CD8-positive, alpha-beta T cell (primary cell): ENCODE measurements at regions of chr12 and their contacts with region 1.

Region 1: GRCh38 chr12:21657326-21658077 is at the start of gene LDHB:
- DNase-seq: peak; percentile 80 to 96 (median 93)
- ATAC-seq: peak; percentile 96
- H3K4me3 ChIP-seq: peak within 1 kb of the TSS; percentile 72 to 95
- H3K4me3 Mint-ChIP-seq: peak within 1 kb of the TSS; percentile 99
- H3K27ac ChIP-seq: peak within 1 kb of the TSS; percentile 70 to 77
- H3K27ac Mint-ChIP-seq: peak within 1 kb of the TSS; percentile 99
- H3K4me1 ChIP-seq: peaks cover 38% of the 10 kb centered on the region
- H3K4me1 Mint-ChIP-seq: peaks cover 60% of the 10 kb centered on the region
- H3K27me3 ChIP-seq: no peaks in the 10 kb centered on the region
- H3K27me3 Mint-ChIP-seq: no peaks in the 10 kb centered on the region
- CTCF ChIP-seq: no peak
- total RNA-seq, gene LDHB: 492 to 577 TPM

Region 2: GRCh38 chr12:21451529-21451928 is 206.0 kb before region 1 on chr12:
- CTCF ChIA-PET with region 1: no interaction called
- POLR2A ChIA-PET with region 1: no interaction called
- intact Hi-C with region 1: loop called in 1 of 2 experiments (anchors 5 kb)
- DNase-seq: no peak
- ATAC-seq: no peak
- H3K4me3 ChIP-seq: no peak overlapping the region
- H3K4me3 Mint-ChIP-seq: no peak overlapping the region
- H3K27ac ChIP-seq: no peak overlapping the region
- H3K27ac Mint-ChIP-seq: peak overlapping the region; percentile 33
- H3K4me1 ChIP-seq: peaks cover 11% of the 10 kb centered on the region
- H3K4me1 Mint-ChIP-seq: peaks cover 28% of the 10 kb centered on the region
- H3K27me3 ChIP-seq: no peaks in the 10 kb centered on the region
- H3K27me3 Mint-ChIP-seq: no peaks in the 10 kb centered on the region
- CTCF ChIP-seq: no peak

Region 3: GRCh38 chr12:21607701-21608100 is 49.8 kb before region 1 on chr12:
- CTCF ChIA-PET with region 1: interaction called, 4 read pairs
- POLR2A ChIA-PET with region 1: interaction called, 7 read pairs
- intact Hi-C with region 1: loop called in 1 of 2 experiments (anchors 1 kb)
- DNase-seq: peak in 2 of 9 experiments; percentile 38 to 57
- ATAC-seq: no peak
- H3K4me3 ChIP-seq: no peak overlapping the region
- H3K4me3 Mint-ChIP-seq: no peak overlapping the region
- H3K27ac ChIP-seq: no peak overlapping the region
- H3K27ac Mint-ChIP-seq: no peak overlapping the region
- H3K4me1 ChIP-seq: peaks cover 10% of the 10 kb centered on the region
- H3K4me1 Mint-ChIP-seq: peaks cover 10% of the 10 kb centered on the region
- H3K27me3 ChIP-seq: no peaks in the 10 kb centered on the region
- H3K27me3 Mint-ChIP-seq: no peaks in the 10 kb centered on the region
- CTCF ChIP-seq: peak; percentile 18

Region 4: DNA sequence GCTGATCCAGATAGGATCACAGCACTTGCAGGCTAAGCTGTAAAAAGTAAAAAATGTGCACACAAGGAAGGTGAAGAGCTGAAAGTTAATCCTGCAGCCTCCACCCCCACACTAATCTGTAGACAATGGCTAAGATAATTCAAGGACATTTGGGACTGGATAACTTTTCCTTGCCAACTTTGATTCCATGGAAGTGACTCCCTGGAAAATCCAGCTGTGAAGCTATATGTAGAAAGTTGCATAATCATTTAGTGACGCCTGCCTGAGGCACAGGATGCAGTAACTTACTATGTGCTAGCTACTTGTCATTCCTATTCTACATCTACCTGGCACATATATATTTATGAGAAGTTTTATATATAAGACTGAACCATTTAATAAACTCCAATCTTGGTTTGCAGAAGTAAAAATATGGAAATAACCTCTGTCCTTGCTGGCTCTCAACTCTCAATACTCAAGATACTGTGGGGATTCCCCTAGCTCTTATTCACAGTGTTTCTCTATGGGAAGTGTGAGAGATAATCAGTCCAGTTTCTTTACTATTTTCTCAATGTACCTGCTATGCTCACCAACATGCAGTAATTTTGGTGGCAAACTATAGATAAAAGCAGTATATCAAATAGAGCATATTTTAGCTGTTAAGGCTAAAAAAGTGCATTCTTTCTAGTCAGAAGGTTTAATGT is 14.7 kb before region 1 on chr12:
- CTCF ChIA-PET with region 1: interaction called, 5 read pairs
- POLR2A ChIA-PET with region 1: interaction called, 20 read pairs
- intact Hi-C with region 1: loop called in 1 of 2 experiments (anchors 1 kb)
- DNase-seq: no peak
- ATAC-seq: no peak
- H3K4me3 ChIP-seq: no peak overlapping the region
- H3K4me3 Mint-ChIP-seq: peak overlapping the region; percentile 0
- H3K27ac ChIP-seq: no peak overlapping the region
- H3K27ac Mint-ChIP-seq: peak overlapping the region; percentile 58
- H3K4me1 ChIP-seq: peaks cover 71% of the 10 kb centered on the region
- H3K4me1 Mint-ChIP-seq: peaks cover 87% of the 10 kb centered on the region
- H3K27me3 ChIP-seq: no peaks in the 10 kb centered on the region
- H3K27me3 Mint-ChIP-seq: no peaks in the 10 kb centered on the region
- CTCF ChIP-seq: no peak

Region 5: GRCh38 chr12:21683115-21683514 is 25.6 kb after region 1 on chr12:
- CTCF ChIA-PET with region 1: interaction called, 35 read pairs
- POLR2A ChIA-PET with region 1: interaction called, 75 read pairs
- intact Hi-C with region 1: loop called in 1 of 2 experiments (anchors 2 kb)
- DNase-seq: no peak
- ATAC-seq: no peak
- H3K4me3 ChIP-seq: no peak overlapping the region
- H3K4me3 Mint-ChIP-seq: no peak overlapping the region
- H3K27ac ChIP-seq: no peak overlapping the region
- H3K27ac Mint-ChIP-seq: no peak overlapping the region
- H3K4me1 ChIP-seq: peaks cover 22% of the 10 kb centered on the region
- H3K4me1 Mint-ChIP-seq: peaks cover 23% of the 10 kb centered on the region
- H3K27me3 ChIP-seq: no peaks in the 10 kb centered on the region
- H3K27me3 Mint-ChIP-seq: peaks cover 2% of the 10 kb centered on the region
- CTCF ChIP-seq: no peak

Region 6: DNA sequence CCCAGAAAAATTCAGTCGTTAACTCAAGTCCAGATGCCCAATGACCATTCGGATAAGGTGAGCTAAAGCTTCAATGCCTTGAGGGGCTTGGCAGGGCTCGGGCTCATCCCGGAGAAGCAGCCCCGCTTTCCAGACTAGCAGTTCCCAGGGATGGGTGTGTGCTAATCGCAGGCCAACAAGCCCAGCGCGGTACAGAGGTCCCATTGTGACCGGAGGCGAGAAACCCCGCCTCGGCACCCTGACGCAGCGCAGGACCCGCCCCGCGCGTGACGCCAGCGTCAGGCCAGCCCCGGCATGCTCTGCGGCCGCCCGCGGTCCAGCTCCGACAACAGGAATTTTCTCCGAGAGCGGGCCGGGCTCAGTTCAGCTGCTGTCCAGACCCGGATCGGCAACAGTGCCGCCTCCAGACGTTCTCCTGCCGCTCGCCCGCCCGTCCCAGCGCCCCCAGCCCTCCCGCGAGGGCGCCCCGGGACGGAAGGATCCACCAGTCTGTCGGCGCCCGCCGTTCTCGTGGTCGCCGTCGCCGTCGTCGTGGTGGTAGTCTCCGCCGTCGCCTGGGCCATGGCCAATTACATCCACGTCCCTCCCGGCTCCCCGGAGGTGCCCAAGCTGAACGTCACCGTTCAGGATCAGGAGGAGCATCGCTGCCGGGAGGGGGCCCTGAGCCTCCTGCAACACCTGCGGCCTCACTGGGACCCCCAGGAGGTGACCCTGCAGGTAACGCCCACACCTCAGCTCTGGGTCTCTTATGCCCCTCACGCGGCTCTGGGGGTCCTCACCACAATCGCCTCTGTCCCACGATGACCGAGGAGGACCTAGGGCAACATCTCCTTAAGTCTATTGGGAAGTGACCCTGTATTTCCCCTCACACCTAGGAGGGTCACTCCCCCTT is 967.6 kb after region 1 on chr12 and contains the start of gene ETNK1:
- CTCF ChIA-PET with region 1: no interaction called
- POLR2A ChIA-PET with region 1: no interaction called
- intact Hi-C with region 1: loop called in 1 of 2 experiments (anchors 10 kb)
- DNase-seq: peak; percentile 70 to 90 (median 83)
- ATAC-seq: peak; percentile 93
- H3K4me3 ChIP-seq: peak within 1 kb of the TSS; percentile 84 to 98
- H3K4me3 Mint-ChIP-seq: peak within 1 kb of the TSS; percentile 99
- H3K27ac ChIP-seq: peak within 1 kb of the TSS; percentile 82 to 93
- H3K27ac Mint-ChIP-seq: peak within 1 kb of the TSS; percentile 99
- H3K4me1 ChIP-seq: peaks cover 28% of the 10 kb centered on the region
- H3K4me1 Mint-ChIP-seq: peaks cover 44% of the 10 kb centered on the region
- H3K27me3 ChIP-seq: peaks cover 0 to 2% of the 10 kb centered on the region in 2 experiments
- H3K27me3 Mint-ChIP-seq: peaks cover 2% of the 10 kb centered on the region
- CTCF ChIP-seq: no peak
- total RNA-seq, gene ETNK1: 17.1 to 23.3 TPM